ENCODE measurements at regions of chr11 and their contacts with region 1.

Region 1: GRCh38 chr11:47858169-47858543 is 10.0 kb upstream of the NUP160 start:
- DNase-seq: peak; percentile 31 to 38
- H3K4me3 ChIP-seq: no peak overlapping the region
- H3K27ac ChIP-seq: peak overlapping the region in 1 of 3 donors; percentile 52
- H3K4me1 ChIP-seq: peaks cover 10 to 12% of the 10 kb centered on the region in 2 donors
- H3K27me3 ChIP-seq: no peaks in the 10 kb centered on the region
- CTCF ChIP-seq: no peak
- POLR2A ChIP-seq: no peak

Region 2: GRCh38 chr11:47980245-47981049 is 122.3 kb after region 1 on chr11 and contains the start of gene PTPRJ:
- intact Hi-C with region 1: no loop called
- DNase-seq: peak; percentile 81 to 82
- H3K4me3 ChIP-seq: peak within 1 kb of the TSS; percentile 18 to 85 (median 66)
- H3K27ac ChIP-seq: peak within 1 kb of the TSS; percentile 97 to 99 (median 98)
- H3K4me1 ChIP-seq: peaks cover 29 to 43% of the 10 kb centered on the region in 2 donors
- H3K27me3 ChIP-seq: no peaks in the 10 kb centered on the region
- CTCF ChIP-seq: no peak
- POLR2A ChIP-seq: peak; percentile 86 to 89
- total RNA-seq, gene PTPRJ: 45.4 to 81.9 (median 58.6) TPM

Region 3: GRCh38 chr11:48034926-48035871 is 177.0 kb after region 1 on chr11:
- intact Hi-C with region 1: no loop called
- DNase-seq: no peak
- H3K4me3 ChIP-seq: no peak overlapping the region
- H3K27ac ChIP-seq: peak overlapping the region in 2 of 3 donors; percentile 14 to 35
- H3K4me1 ChIP-seq: peaks cover 29 to 42% of the 10 kb centered on the region in 2 donors
- H3K27me3 ChIP-seq: no peaks in the 10 kb centered on the region
- CTCF ChIP-seq: no peak
- POLR2A ChIP-seq: no peak

Region 4: DNA sequence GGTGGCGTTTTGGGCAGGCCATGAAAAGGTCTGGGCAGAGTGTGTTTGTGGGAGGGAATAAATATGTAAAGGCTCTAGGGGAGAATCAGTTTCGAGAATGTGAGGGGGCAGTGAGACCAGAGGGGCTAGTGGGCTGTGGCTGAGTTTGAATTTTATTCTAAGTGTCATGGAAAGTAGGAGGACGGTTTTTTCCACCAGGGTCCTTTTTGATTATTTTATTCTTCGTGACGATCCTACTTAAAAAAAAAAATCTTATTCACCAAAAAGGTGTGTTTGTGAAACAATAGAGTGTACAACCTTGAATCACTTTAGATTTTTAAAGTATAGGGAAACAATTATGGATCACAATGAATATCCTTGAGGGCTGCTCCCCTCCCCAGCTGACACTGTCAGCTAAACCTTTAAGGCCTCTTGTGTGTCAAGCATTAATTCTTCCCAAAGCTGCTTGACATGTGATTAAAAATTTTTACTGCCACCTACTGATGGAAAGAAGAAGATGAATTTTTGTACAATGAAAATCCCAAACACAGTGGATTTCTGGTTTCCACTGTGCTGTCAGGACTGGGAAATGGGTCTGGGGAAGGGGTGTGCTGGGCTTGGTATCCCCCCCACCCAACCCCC is 251.0 kb after region 1 on chr11:
- intact Hi-C with region 1: loop called (anchors 10 kb)
- DNase-seq: no peak
- H3K4me3 ChIP-seq: no peak overlapping the region
- H3K27ac ChIP-seq: peak overlapping the region; percentile 70 to 78 (median 75)
- H3K4me1 ChIP-seq: peaks cover 12 to 27% of the 10 kb centered on the region in 2 donors
- H3K27me3 ChIP-seq: no peaks in the 10 kb centered on the region
- CTCF ChIP-seq: peak in 4 of 6 experiments; percentile 33 to 52 (median 42)
- POLR2A ChIP-seq: no peak